Naive thymus-derived CD4-positive, alpha-beta T cell (primary cell): ENCODE measurements at regions of chr15 and their contacts with region 1.

Region 1: DNA sequence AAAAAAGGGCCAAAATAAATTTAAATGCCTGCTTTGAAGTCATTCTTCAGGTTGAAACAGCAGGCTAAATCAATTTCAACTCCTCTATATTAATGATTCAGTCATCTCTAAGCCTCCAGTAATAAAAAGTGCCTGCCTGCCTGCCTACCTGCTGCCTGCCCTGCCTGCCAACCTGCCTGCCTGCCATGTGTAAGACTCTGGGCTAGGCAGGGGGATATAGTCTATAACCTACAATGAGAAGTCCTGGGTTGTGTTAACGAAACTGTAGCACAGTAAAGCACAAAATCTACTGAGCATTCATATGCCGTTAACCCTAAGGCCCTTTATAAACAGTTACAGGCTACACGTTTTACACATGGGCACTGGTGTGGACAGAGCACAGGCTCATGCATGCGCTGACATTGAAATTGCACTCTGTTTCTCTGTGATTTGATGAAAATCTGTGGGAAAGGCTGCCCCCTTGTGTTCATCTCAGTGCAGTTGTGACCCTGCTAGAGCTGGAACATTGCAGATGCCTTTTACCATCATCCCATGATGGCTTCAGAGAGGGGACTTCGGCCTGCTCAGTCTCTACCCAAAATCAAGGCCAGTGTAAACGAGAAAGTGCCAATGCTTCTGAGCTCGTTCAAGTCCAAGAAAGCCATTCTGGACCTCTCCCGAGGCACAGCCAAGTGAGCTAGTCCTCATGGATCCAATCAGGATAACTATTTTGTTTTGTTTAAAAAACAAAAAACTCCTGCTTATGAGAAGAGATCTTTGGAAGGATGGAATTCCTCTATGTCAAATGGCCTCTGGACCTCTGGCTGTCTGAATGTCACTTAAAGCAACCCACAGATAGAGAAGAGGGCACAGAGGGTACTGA is 64.6 kb downstream of the EFL1 start:
- DNase-seq: peak; percentile 6 to 61 (median 46)
- ATAC-seq: peak; percentile 81
- H3K4me3 ChIP-seq: no peak overlapping the region
- H3K4me3 Mint-ChIP-seq: no peak overlapping the region
- H3K27ac ChIP-seq: no peak overlapping the region
- H3K27ac Mint-ChIP-seq: peak overlapping the region in 1 of 9 donors; percentile 12
- H3K4me1 ChIP-seq: no peaks in the 10 kb centered on the region
- H3K4me1 Mint-ChIP-seq: peaks cover 0 to 6% (median 3%) of the 10 kb centered on the region in 7 donors
- H3K27me3 ChIP-seq: no peaks in the 10 kb centered on the region
- H3K27me3 Mint-ChIP-seq: no peaks in the 10 kb centered on the region

Region 2: GRCh38 chr15:82003916-82004315 is 194.0 kb before region 1 on chr15:
- CTCF ChIA-PET with region 1: no interaction called
- POLR2A ChIA-PET with region 1: no interaction called
- intact Hi-C with region 1: no loop called
- DNase-seq: no peak
- ATAC-seq: no peak
- H3K4me3 ChIP-seq: no peak overlapping the region
- H3K4me3 Mint-ChIP-seq: no peak overlapping the region
- H3K27ac ChIP-seq: no peak overlapping the region
- H3K27ac Mint-ChIP-seq: no peak overlapping the region
- H3K4me1 ChIP-seq: no peaks in the 10 kb centered on the region
- H3K4me1 Mint-ChIP-seq: no peaks in the 10 kb centered on the region
- H3K27me3 ChIP-seq: no peaks in the 10 kb centered on the region
- H3K27me3 Mint-ChIP-seq: peaks cover 0 to 11% (median 9%) of the 10 kb centered on the region in 5 donors

Region 3: DNA sequence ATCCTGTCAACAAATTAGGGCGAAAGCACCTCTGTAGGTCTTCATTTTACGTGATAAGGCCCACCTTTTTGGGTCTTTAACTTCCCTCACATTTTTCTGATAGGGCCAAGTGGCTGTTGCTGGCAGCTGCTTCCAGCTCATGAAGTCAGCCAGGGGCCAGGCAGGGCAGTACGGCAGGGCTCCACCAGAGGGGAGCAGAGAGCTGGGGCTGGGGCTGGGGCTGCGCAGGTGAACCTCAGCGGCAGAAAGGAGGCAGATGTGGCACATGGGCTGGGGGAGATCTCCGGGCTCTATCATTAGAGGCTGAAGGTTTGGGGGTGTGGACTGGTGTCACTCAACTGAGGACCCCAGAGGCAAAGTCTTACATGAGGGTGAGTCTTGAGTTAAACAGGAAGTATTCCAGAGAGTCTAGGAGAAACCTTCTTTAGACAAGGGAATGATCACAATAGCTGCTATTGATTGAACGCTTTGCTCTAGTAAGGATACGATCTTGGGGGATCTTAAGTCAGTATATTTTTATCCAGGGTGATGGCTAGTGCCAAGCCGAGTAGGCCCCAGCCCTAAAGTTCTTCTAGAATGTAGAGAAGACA is 89.4 kb before region 1 on chr15:
- CTCF ChIA-PET with region 1: no interaction called
- POLR2A ChIA-PET with region 1: no interaction called
- intact Hi-C with region 1: loop called (anchors 1 kb)
- DNase-seq: peak; percentile 11 to 79 (median 55)
- ATAC-seq: peak; percentile 92
- H3K4me3 ChIP-seq: no peak overlapping the region
- H3K4me3 Mint-ChIP-seq: no peak overlapping the region
- H3K27ac ChIP-seq: no peak overlapping the region
- H3K27ac Mint-ChIP-seq: no peak overlapping the region
- H3K4me1 ChIP-seq: no peaks in the 10 kb centered on the region
- H3K4me1 Mint-ChIP-seq: peaks cover 0 to 3% (median 0%) of the 10 kb centered on the region in 7 donors
- H3K27me3 ChIP-seq: peaks cover 0 to 3% of the 10 kb centered on the region in 2 donors
- H3K27me3 Mint-ChIP-seq: no peaks in the 10 kb centered on the region

Region 4: GRCh38 chr15:82262422-82263026 is 64.6 kb after region 1 on chr15 and contains the starts of genes EFL1 and SAXO2:
- CTCF ChIA-PET with region 1: no interaction called
- POLR2A ChIA-PET with region 1: no interaction called
- intact Hi-C with region 1: no loop called
- DNase-seq: peak; percentile 83 to 94 (median 88)
- ATAC-seq: peak; percentile 98
- H3K4me3 ChIP-seq: peak within 1 kb of the TSS; percentile 67
- H3K4me3 Mint-ChIP-seq: peak within 1 kb of the TSS; percentile 86 to 99 (median 96)
- H3K27ac ChIP-seq: peak within 1 kb of the TSS; percentile 57
- H3K27ac Mint-ChIP-seq: peak within 1 kb of the TSS; percentile 40 to 92 (median 89)
- H3K4me1 ChIP-seq: peaks cover 8 to 16% of the 10 kb centered on the region in 2 donors
- H3K4me1 Mint-ChIP-seq: peaks cover 22 to 53% (median 34%) of the 10 kb centered on the region in 7 donors
- H3K27me3 ChIP-seq: no peaks in the 10 kb centered on the region
- H3K27me3 Mint-ChIP-seq: peaks cover 0 to 3% (median 0%) of the 10 kb centered on the region in 5 donors
- total RNA-seq, gene EFL1: 9.9 to 27.5 (median 16.6) TPM
- total RNA-seq, gene SAXO2: 1.1 to 6.4 (median 2.5) TPM in 4 of 5 experiments, not detected in the other